Aorta (tissue), 5 donors: ENCODE measurements at regions of chr18 and their contacts with region 1.

Region 1: GRCh38 chr18:47772374-47773248 is 157.8 kb downstream of the SMAD2 start:
- DNase-seq: no peak
- ATAC-seq: no peak
- H3K4me3 ChIP-seq: no peak overlapping the region
- H3K27ac ChIP-seq: no peak overlapping the region
- H3K4me1 ChIP-seq: no peaks in the 10 kb centered on the region
- H3K27me3 ChIP-seq: no peaks in the 10 kb centered on the region

Region 2: GRCh38 chr18:48022531-48023329 is 250.1 kb after region 1 on chr18:
- intact Hi-C with region 1: loop called in 1 of 2 experiments (anchors 2 kb)
- DNase-seq: peak in 1 of 2 donors; percentile 57
- ATAC-seq: peak; percentile 62
- H3K4me3 ChIP-seq: no peak overlapping the region
- H3K27ac ChIP-seq: no peak overlapping the region
- H3K4me1 ChIP-seq: no peaks in the 10 kb centered on the region
- H3K27me3 ChIP-seq: no peaks in the 10 kb centered on the region